ENCODE measurements at regions of chr7 and their contacts with region 1.

Region 1: GRCh38 chr7:138886501-138886917 is 88.5 kb upstream of the ATP6V0A4 start:
- DNase-seq: peak; percentile 38
- H3K4me3 ChIP-seq: no peak overlapping the region
- H3K27ac ChIP-seq: no peak overlapping the region
- H3K27me3 ChIP-seq: no peaks in the 10 kb centered on the region
- CTCF ChIP-seq: peak; percentile 63

Region 2: DNA sequence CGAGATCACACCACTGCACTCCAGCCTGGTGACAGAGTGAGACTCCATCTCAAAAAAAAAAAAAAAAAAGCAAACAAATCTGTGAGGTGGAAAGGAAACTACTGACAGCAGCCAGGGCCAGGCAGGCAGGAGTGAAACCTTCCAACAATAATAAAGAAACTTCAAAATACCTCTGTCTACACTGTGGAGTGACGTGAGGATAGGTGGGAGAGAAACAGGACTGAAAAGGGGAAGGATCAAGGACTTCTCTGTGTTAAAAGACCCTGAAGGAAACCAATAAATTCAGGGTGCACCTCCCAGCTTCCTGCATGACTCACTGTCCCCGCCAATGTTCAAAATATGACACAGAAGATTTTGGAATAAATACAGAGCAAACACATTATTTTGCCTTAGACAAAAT is 11.7 kb after region 1 on chr7:
- CTCF ChIA-PET with region 1: interaction called, 40 read pairs
- POLR2A ChIA-PET with region 1: no interaction called
- DNase-seq: no peak
- H3K4me3 ChIP-seq: no peak overlapping the region
- H3K27ac ChIP-seq: no peak overlapping the region
- H3K27me3 ChIP-seq: no peaks in the 10 kb centered on the region
- CTCF ChIP-seq: no peak

Region 3: GRCh38 chr7:138924501-138925225 is 38.2 kb after region 1 on chr7:
- CTCF ChIA-PET with region 1: interaction called, 21 read pairs
- POLR2A ChIA-PET with region 1: no interaction called
- DNase-seq: no peak
- H3K4me3 ChIP-seq: no peak overlapping the region
- H3K27ac ChIP-seq: no peak overlapping the region
- H3K27me3 ChIP-seq: no peaks in the 10 kb centered on the region
- CTCF ChIP-seq: no peak

Region 4: DNA sequence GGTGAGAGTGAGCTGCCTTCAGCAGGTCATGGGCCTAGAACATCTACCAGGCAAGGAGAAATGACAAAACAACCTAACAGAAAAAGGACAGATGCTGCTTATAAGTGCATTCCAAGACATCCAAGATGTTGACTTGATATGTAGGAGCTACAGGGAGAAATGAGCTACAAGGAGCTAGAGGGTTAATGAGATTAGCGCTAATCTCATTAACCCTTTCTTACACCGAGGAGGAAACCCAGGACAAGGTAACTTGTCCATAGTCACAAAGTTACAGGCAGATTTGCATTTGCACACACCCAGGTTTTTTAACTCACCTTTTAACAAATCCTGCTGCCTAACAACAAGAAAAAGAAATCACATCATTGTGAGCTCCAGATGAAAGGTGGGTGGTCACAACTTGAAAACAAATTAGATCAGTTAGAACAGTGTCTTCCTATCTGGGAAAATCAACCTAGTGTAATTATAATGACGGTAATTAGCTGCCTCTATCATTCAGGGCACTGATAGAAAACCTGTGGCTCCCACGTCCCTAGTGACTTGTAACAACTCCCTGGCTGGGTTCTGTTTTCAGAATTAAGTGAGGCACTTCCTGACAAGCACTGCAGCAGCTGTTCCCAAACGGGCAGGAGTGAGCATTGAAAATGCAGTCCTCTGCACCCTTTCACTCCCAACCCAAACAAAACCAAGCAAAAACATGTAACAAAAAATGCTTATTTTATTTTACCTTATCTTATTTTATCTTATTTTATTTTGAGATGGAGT is 89.0 kb after region 1 on chr7:
- CTCF ChIA-PET with region 1: interaction called, 16 read pairs
- POLR2A ChIA-PET with region 1: interaction called, 4 read pairs
- DNase-seq: no peak
- H3K4me3 ChIP-seq: no peak overlapping the region
- H3K27ac ChIP-seq: no peak overlapping the region
- H3K27me3 ChIP-seq: no peaks in the 10 kb centered on the region
- CTCF ChIP-seq: no peak

Region 5: GRCh38 chr7:139016931-139017511 is 130.5 kb after region 1 on chr7:
- CTCF ChIA-PET with region 1: interaction called, 11 read pairs
- POLR2A ChIA-PET with region 1: no interaction called
- DNase-seq: peak; percentile 41
- H3K4me3 ChIP-seq: no peak overlapping the region
- H3K27ac ChIP-seq: no peak overlapping the region
- H3K27me3 ChIP-seq: no peaks in the 10 kb centered on the region
- CTCF ChIP-seq: peak; percentile 78

Region 6: DNA sequence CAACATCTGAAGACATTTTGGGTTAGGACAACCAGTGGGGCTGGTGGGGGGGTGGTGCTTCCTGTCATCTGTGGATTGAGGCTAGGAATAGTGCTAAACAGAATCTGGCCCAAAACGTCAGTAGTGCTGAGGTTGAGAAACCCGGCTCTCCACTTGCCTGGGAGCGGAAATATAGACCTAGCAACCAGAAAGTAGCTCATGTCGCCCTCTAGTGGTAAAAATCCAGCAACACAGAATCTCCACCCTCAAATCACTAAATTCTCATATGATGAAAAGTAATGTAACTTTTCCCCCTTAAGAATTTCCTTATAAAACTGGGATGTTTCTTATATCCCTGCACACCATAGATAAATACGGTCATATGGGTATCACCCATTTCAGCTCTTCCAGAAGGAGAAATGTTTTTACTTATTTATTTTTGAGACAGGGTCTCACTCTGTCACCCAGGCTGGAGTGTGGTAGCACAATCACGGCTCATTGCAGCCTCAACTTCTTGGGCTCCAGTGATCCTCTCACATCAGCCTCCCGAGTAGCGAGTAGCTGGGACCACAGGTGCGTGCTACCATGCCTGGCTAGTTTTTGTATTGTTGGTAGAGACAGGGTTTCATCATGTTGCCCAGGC is 188.6 kb after region 1 on chr7:
- CTCF ChIA-PET with region 1: interaction called, 74 read pairs
- POLR2A ChIA-PET with region 1: no interaction called
- DNase-seq: peak; percentile 65
- H3K4me3 ChIP-seq: no peak overlapping the region
- H3K27ac ChIP-seq: no peak overlapping the region
- H3K27me3 ChIP-seq: no peaks in the 10 kb centered on the region
- CTCF ChIP-seq: peak; percentile 76